ENCODE measurements at regions of chr19 and their contacts with region 1.

Region 1: DNA sequence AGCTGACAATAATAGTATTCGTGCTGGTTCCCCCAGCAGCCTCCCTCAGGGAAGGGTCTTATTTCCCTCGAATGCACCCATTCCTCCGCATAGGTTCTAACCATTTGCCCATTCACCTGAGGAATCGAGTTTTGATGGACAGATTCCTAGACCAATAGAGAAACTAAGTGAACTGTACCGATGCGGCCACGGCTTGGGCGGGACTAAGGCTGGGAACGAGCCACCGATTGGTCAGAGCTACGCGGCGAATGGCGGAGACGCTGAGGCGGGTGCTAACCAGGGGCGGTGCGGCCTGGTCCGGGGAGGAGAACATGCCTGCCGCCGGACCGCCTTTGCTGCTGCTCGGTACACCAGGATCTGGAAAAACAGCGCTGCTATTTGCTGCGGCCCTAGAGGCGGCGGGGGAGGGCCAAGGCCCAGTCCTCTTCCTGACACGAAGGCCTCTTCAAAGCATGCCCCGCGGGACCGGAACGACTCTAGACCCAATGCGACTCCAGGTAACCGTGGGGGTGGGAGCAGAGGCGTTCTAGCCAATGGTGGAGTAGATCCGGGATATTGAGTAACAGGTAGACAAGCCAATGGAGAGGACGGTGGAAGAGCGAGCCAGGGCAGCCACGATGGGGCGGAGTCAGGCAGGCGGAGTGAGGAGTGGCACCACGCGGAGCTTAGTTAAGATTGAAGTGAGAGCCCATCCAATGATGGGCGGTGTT is at the start of gene SWSAP1:
- DNase-seq: peak; percentile 97
- H3K4me3 Mint-ChIP-seq: peak within 1 kb of the TSS; percentile 38
- H3K27ac Mint-ChIP-seq: no peak within 1 kb of the TSS
- H3K4me1 Mint-ChIP-seq: peaks cover 27% of the 10 kb centered on the region
- H3K27me3 Mint-ChIP-seq: no peaks in the 10 kb centered on the region
- total RNA-seq, gene SWSAP1: 2.6 and 2.8 TPM in 2 replicates

Region 2: DNA sequence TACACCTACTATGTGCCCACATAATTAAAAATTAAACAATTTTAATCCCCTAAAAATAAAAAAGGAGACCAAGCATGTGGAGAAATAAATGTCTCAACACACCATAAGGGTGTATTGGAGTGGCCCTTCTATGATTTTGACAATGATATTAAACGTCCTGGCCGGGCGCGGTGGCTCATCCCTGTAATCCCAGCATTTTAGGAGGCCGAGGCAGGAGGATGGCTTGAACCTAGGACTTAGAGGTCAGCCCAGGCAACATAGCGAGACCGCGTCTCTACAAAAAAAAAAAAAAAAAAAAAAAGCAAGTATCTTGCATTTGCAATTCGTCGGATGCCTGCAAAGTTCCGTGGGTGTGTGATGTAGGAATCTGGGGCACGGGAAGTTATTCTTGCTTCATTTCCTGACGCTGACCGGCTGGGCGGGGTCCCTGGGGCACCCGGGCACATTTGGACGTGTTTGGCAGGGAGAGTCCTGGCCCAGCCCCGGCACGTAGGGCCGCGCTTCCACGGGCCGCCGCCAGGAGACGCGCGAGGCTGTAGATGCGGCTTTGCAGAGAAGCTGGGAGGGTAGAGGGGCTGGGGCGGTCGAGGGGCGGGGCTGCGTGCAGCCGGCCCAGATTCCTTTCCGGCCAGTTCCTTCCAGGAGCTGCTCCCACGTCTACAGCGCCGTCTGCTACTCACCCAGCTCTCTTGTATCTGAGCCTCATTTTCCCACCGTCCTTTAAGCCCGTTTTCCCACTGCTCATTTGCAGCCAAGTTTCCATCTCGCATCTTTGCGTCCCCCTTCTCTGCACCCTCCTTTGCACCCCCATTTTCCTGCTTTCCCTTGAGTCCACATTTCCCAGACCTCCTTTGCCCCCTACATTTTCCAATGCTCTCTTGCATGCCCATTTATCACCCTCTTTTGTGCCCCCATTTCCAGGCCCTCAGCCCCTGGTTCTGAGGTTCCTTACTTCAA is 80.9 kb before region 1 on chr19:
- intact Hi-C with region 1: loop called (anchors 10 kb)
- DNase-seq: peak; percentile 71
- H3K4me3 Mint-ChIP-seq: peak overlapping the region; percentile 56
- H3K27ac Mint-ChIP-seq: no peak overlapping the region
- H3K4me1 Mint-ChIP-seq: peaks cover 9% of the 10 kb centered on the region
- H3K27me3 Mint-ChIP-seq: peaks cover 22% of the 10 kb centered on the region

Region 3: GRCh38 chr19:11324079-11324661 is 50.4 kb before region 1 on chr19:
- intact Hi-C with region 1: no loop called
- DNase-seq: peak; percentile 41
- H3K4me3 Mint-ChIP-seq: peak overlapping the region; percentile 60
- H3K27ac Mint-ChIP-seq: peak overlapping the region; percentile 87
- H3K4me1 Mint-ChIP-seq: peaks cover 31% of the 10 kb centered on the region
- H3K27me3 Mint-ChIP-seq: no peaks in the 10 kb centered on the region

Region 4: GRCh38 chr19:11346092-11346940 is 28.3 kb before region 1 on chr19 and contains the starts of genes CCDC159 and TMEM205:
- intact Hi-C with region 1: loop called (anchors 2 kb)
- DNase-seq: peak; percentile 98
- H3K4me3 Mint-ChIP-seq: peak within 1 kb of the TSS; percentile 96
- H3K27ac Mint-ChIP-seq: peak within 1 kb of the TSS; percentile 94
- H3K4me1 Mint-ChIP-seq: peaks cover 20% of the 10 kb centered on the region
- H3K27me3 Mint-ChIP-seq: no peaks in the 10 kb centered on the region
- total RNA-seq, gene CCDC159: 14.6 and 16.3 TPM in 2 replicates
- total RNA-seq, gene TMEM205: 34.0 and 34.9 TPM in 2 replicates

Region 5: DNA sequence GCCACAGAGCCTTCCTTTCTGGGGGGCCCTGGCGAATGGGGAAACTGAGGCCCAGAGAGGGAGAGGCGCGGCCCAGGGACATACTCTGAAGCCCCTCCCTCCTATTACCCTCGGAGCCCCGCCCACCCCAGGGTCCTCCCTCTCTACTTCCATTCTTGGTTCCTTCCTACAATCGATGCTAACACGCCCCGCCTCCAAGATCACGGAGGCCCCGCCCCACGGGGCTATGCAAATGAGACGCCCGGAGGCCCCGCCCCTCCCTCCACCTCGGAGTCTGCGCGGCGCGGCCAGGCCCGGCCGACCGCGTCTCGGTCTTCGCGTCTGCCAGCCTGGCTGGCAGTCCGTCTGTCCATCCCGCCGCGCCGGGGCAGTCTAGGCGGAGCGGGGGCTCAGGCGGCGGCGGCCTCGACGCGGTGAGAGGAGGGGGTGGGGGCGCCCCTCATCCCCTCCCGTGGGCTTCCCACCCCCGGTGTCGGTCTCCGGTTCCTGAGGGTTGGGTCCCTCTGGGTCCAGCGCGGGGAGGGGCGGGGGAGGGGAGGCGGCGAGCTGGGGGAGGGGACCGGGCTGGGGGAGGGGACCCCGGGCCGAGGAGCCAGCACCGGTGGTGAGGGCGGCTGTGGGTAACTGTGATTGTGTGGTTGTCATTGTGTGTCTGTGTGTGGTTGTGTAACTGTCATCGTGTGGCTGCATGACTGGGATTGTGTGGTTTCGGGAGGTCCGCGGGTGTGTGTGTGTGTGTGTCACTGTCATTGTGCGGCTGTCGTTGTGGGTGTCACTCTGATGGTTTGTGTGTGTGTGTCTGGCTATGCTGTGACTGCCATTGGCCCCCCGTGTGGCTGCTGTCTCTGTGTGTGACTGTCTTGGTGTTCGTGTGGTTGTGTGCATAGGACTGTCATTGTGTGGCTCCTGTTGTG is 19.2 kb before region 1 on chr19 and contains the start of gene PLPPR2:
- intact Hi-C with region 1: loop called (anchors 1 kb)
- DNase-seq: peak; percentile 80
- H3K4me3 Mint-ChIP-seq: peak within 1 kb of the TSS; percentile 72
- H3K27ac Mint-ChIP-seq: no peak within 1 kb of the TSS
- H3K4me1 Mint-ChIP-seq: peaks cover 7% of the 10 kb centered on the region
- H3K27me3 Mint-ChIP-seq: peaks cover 5% of the 10 kb centered on the region
- total RNA-seq, gene PLPPR2: 2.6 and 3.4 TPM in 2 replicates

Region 6: DNA sequence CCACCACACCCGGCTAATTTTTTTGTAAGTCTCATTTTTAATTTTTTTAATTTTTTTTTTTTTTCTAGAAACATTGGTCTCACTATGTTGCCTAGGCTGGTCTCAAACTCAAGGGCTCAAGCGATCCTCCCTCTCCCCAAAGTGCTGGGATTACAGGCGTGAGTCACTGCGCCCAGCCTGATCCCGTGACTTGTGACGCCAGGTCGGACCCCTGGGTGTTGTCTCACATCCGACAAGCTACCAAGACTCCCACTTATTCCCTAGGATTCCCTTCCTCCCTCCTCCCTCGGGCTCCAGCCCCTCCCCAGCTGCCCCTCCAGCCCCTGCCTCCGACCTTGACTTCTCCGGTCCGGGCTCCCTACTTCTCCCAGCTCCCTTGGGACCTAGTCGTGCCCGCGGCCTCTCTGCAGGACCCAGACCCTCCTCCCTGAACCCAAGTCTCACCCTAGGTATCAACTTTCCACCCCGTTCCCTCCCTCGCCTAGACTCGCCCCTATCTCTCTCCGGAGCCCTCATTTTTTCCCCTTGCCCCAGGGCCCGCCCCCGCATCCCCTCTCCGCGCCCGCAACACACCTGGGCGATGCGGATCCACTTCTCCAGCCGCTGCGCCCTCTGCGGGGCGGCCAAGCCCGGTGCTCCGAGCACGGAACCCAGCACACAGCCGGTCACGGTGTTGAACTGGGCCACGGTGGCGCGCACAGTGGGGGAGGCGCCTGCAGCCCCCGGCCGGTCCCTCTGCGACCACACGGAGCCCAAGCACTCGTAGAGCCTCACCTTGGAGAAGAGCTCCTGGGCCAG is 31.5 kb after region 1 on chr19:
- intact Hi-C with region 1: no loop called
- DNase-seq: no peak
- H3K4me3 Mint-ChIP-seq: no peak overlapping the region
- H3K27ac Mint-ChIP-seq: no peak overlapping the region
- H3K4me1 Mint-ChIP-seq: no peaks in the 10 kb centered on the region
- H3K27me3 Mint-ChIP-seq: peaks cover 6% of the 10 kb centered on the region

Region 7: GRCh38 chr19:11446652-11447301 is 72.2 kb after region 1 on chr19:
- intact Hi-C with region 1: no loop called
- DNase-seq: no peak
- H3K4me3 Mint-ChIP-seq: no peak overlapping the region
- H3K27ac Mint-ChIP-seq: no peak overlapping the region
- H3K4me1 Mint-ChIP-seq: no peaks in the 10 kb centered on the region
- H3K27me3 Mint-ChIP-seq: no peaks in the 10 kb centered on the region